ENCODE measurements at regions of chr1 and their contacts with region 1.

Region 1: GRCh38 chr1:203172128-203173010 is 3.3 kb downstream of the MYBPH start:
- DNase-seq: peak; percentile 64
- H3K4me3 Mint-ChIP-seq: no peak overlapping the region
- H3K27ac Mint-ChIP-seq: no peak overlapping the region
- H3K4me1 Mint-ChIP-seq: no peaks in the 10 kb centered on the region
- H3K27me3 Mint-ChIP-seq: no peaks in the 10 kb centered on the region

Region 2: DNA sequence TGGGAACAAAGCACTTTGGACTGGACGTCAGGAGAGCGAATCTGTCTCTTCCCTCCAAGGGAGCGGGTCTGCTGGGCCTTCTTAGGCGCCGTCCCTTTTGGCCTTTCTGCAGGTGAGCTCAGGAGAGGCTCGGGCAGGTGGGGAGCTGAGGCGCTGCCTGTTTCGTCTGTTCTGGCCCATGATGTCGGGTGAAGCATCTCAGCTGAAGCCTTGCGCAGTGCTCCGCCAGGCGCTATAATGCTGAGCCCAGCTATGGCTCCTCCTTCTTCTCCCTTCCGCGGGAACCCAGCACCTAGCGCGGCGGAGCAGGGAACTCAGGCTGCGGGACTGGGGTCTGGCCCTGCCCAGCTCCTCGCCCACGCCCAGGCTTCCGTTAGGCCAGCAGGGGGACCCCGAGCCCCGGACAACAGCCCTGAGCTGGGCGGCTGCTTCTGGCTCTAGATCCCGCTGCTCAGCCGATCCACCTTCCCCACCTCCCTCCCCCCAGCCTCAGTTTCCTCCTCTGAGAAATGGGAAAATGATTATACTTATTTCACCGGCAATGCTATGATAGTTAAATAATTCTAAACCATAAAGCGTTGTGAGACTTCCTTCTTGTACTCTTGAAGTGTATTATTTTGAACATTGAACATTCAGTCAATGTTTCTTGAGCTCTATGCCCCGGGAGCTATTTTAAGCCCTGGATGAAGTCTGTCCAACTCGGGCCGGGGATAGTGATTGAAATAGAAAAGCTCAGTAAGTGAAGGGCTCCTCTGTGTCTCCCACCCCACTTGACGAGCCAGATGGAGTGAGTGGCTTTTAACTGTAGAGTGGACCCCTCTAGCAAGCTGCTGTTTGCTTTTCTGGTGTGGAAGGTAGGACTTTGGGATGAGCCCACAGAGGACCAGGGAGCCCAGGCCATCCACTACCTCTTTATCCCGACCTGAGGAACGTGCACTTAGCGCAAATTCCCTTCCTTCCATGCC is 54.5 kb before region 1 on chr1:
- CTCF ChIA-PET with region 1: interaction called, 19 read pairs
- POLR2A ChIA-PET with region 1: no interaction called
- DNase-seq: peak; percentile 48
- H3K4me3 Mint-ChIP-seq: no peak overlapping the region
- H3K27ac Mint-ChIP-seq: no peak overlapping the region
- H3K4me1 Mint-ChIP-seq: peaks cover 14% of the 10 kb centered on the region
- H3K27me3 Mint-ChIP-seq: peaks cover 52% of the 10 kb centered on the region

Region 3: DNA sequence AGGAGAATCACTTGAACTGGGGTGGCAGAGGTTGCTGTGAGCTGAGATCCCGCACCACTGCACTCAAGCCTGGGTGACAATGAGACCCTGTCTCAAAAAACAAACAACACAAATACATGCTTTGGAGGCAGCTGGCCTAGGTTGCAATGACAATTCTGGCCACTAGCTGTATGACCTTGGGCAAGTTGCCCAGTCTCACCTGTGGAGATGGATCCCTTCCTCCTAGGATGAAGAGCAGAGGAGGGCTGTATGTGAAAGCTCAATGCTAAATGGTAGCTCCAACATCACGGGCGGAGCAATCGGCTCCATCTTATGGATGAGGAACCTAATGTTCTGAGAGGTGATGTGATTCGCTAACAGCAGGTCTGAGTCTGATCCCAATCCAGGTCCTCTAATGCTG is 24.2 kb before region 1 on chr1:
- CTCF ChIA-PET with region 1: interaction called, 16 read pairs
- POLR2A ChIA-PET with region 1: no interaction called
- DNase-seq: no peak
- H3K4me3 Mint-ChIP-seq: no peak overlapping the region
- H3K27ac Mint-ChIP-seq: no peak overlapping the region
- H3K4me1 Mint-ChIP-seq: no peaks in the 10 kb centered on the region
- H3K27me3 Mint-ChIP-seq: peaks cover 5% of the 10 kb centered on the region

Measured in activated CD4-positive, alpha-beta memory T cell treated with anti-CD3 and anti-CD28 coated beads, Interleukin-2, amount 10 ng/mL, durations not matched to agents 7 days and 5 days (primary cell).